ENCODE measurements at regions of chr7 and their contacts with region 1.

Region 1: GRCh38 chr7:29105752-29106668 is 40.3 kb downstream of the CPVL start:
- DNase-seq: peak; percentile 42
- ATAC-seq: peak; percentile 74
- H3K4me3 Mint-ChIP-seq: no peak overlapping the region
- H3K27ac Mint-ChIP-seq: no peak overlapping the region
- H3K4me1 Mint-ChIP-seq: peaks cover 2% of the 10 kb centered on the region
- H3K27me3 Mint-ChIP-seq: peaks cover 7% of the 10 kb centered on the region

Region 2: DNA sequence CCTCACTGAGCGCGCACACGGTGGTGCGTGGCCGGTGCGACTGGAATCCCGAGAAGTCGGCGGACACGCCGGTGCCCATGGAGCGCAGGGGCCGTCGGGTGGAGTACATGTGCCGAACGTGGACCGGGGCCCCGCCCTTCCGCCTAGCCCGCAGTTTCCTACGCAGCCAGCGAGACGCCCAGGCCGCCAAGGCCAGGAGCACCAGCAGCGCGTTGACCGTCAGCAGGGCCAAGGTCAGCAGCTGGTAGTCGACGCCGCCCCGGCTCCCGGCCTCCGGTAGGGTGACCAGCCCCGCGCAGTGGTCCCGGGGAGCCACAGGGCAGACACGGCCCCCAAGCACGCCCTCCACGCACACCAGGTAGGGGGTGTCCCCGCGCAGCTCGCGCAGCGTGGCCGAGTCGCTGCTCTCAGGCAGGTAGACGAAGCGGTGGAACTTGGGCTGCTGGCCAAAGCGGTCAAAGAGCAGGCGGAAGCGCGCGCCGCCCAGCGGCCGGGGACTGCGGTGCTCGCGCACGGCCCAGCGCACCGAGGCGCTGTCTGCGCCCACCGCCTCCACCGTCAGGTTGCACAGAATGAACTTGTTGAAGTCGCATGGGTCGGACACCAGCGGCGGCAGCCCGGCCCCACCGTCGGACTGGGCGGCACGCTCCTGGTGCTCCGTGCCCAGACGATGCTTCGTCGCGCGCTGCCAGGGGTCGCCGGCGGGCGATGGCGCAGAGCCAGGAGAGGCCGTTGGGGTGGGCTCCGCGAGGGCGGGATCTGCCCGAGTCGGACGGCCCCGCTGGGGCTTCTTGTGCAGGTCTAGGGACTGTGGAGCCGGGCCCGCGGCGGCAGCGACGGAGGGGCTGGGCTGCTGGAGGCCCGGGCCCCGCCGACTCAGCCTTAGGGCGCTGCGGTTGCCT is 150.0 kb before region 1 on chr7:
- CTCF ChIA-PET with region 1: interaction called, 13 read pairs
- POLR2A ChIA-PET with region 1: no interaction called
- DNase-seq: peak; percentile 33
- ATAC-seq: peak; percentile 43
- H3K4me3 Mint-ChIP-seq: no peak overlapping the region
- H3K27ac Mint-ChIP-seq: no peak overlapping the region
- H3K4me1 Mint-ChIP-seq: peaks cover 18% of the 10 kb centered on the region
- H3K27me3 Mint-ChIP-seq: peaks cover 73% of the 10 kb centered on the region

Region 3: GRCh38 chr7:29057046-29057445 is 49.0 kb before region 1 on chr7:
- CTCF ChIA-PET with region 1: no interaction called
- POLR2A ChIA-PET with region 1: no interaction called
- DNase-seq: no peak
- ATAC-seq: no peak
- H3K4me3 Mint-ChIP-seq: no peak overlapping the region
- H3K27ac Mint-ChIP-seq: no peak overlapping the region
- H3K4me1 Mint-ChIP-seq: no peaks in the 10 kb centered on the region
- H3K27me3 Mint-ChIP-seq: peaks cover 8% of the 10 kb centered on the region

Region 4: GRCh38 chr7:29091715-29092114 is 14.3 kb before region 1 on chr7:
- CTCF ChIA-PET with region 1: interaction called, 10 read pairs
- POLR2A ChIA-PET with region 1: no interaction called
- DNase-seq: no peak
- ATAC-seq: peak; percentile 73
- H3K4me3 Mint-ChIP-seq: peak overlapping the region; percentile 69
- H3K27ac Mint-ChIP-seq: peak overlapping the region; percentile 74
- H3K4me1 Mint-ChIP-seq: peaks cover 21% of the 10 kb centered on the region
- H3K27me3 Mint-ChIP-seq: peaks cover 4% of the 10 kb centered on the region

Region 5: DNA sequence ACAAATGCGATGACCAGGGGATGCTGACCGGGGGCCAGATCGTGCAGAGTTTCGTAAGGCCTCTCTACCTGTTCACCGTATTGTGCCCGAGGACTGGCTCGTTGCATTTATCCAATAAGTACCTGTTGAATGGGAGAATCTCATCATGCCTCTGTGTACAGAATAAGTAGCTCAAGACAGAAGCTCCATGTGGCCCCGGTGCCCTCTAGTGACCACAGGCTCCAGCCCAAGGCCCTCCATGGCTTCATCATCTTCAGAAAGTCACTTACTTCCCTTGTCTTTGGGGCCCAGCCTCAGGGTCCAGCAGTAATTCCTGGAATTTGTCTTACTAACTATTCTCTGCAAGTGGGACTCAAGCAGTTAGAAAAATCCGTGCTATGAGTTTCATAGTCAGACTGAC is 239.6 kb after region 1 on chr7:
- CTCF ChIA-PET with region 1: interaction called, 13 read pairs
- POLR2A ChIA-PET with region 1: no interaction called
- DNase-seq: peak; percentile 50
- ATAC-seq: peak; percentile 61
- H3K4me3 Mint-ChIP-seq: no peak overlapping the region
- H3K27ac Mint-ChIP-seq: no peak overlapping the region
- H3K4me1 Mint-ChIP-seq: no peaks in the 10 kb centered on the region
- H3K27me3 Mint-ChIP-seq: peaks cover 4% of the 10 kb centered on the region

Region 6: GRCh38 chr7:29408841-29409243 is 302.8 kb after region 1 on chr7:
- CTCF ChIA-PET with region 1: interaction called, 13 read pairs
- POLR2A ChIA-PET with region 1: no interaction called
- DNase-seq: peak; percentile 71
- ATAC-seq: peak; percentile 58
- H3K4me3 Mint-ChIP-seq: no peak overlapping the region
- H3K27ac Mint-ChIP-seq: no peak overlapping the region
- H3K4me1 Mint-ChIP-seq: no peaks in the 10 kb centered on the region
- H3K27me3 Mint-ChIP-seq: no peaks in the 10 kb centered on the region

Measured in activated CD8-positive, alpha-beta T cell treated with anti-CD3 and anti-CD28 coated beads, Interleukin-2, amount 10 ng/mL, durations not matched to agents 7 days and 5 days (primary cell).